ENCODE measurements at regions of chr5 and their contacts with region 1.

Region 1: DNA sequence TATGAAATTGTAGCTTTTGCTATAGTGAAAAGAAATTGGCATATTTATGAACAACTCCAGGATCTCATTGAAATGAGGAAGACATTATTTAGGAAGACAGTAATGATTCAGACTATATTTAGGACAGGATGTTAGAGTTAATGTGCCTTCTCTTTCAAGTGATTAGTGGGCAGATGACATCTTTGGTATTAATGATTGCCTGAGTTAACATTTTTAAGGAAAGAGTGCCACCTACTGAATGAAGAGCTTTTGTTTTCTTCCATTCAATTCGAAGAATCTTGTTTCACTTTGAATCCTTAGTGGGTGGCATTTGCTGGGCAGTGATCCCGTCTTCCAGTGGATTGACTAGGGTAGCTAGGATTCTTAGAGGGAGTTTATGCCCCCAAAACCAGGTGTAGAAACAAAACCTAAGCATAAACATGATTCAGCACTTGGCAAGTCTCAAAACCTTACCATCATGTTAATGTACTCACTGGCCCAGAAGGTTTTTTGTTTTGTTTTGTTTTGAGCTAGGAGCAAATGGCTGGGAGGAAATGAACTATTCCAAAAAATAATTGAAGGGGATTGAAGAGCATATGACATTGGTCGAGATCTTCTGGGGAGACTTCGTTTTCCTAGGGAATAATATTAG is 23.2 kb downstream of the MAP3K1 start:
- DNase-seq: peak; percentile 26
- H3K4me3 ChIP-seq: peak overlapping the region; percentile 36
- H3K27ac ChIP-seq: no peak overlapping the region
- H3K27me3 ChIP-seq: no peaks in the 10 kb centered on the region
- CTCF ChIP-seq: peak; percentile 51

Region 2: DNA sequence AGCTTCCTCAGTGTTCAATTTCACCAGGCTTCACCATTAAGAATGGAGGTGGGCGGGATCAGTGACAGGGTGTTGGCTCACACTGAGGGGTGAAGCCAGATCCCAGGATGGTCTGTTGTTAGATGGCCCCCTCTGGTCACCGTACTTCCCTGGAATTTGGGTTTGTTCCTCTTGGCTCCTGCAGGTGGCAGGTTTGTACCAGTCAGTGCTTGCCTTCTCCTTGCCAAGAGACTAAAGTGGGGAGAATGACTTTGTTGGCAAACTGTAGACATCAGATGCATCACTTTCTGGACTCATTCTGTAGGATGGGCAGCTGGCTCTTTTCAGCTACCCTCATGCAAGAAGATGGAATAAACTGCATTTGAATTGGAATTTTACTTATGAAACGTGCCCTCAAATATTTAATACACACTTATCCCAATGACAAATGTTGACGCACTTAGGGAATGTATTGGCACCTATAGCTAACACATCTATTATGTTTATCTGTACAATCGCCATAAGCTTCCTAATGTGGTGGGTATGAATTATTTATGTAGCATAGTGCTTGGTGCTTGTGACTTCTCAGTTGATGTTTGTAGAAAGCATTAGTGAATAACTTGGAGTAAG is 574.0 kb before region 1 on chr5:
- CTCF ChIA-PET with region 1: interaction called, 175 read pairs
- POLR2A ChIA-PET with region 1: no interaction called
- DNase-seq: no peak
- H3K4me3 ChIP-seq: no peak overlapping the region
- H3K27ac ChIP-seq: no peak overlapping the region
- H3K27me3 ChIP-seq: no peaks in the 10 kb centered on the region
- CTCF ChIP-seq: peak; percentile 55

Region 3: GRCh38 chr5:56818450-56819037 is 20.0 kb before region 1 on chr5:
- CTCF ChIA-PET with region 1: interaction called, 26 read pairs
- POLR2A ChIA-PET with region 1: no interaction called
- DNase-seq: no peak
- H3K4me3 ChIP-seq: peak overlapping the region; percentile 28
- H3K27ac ChIP-seq: no peak overlapping the region
- H3K27me3 ChIP-seq: no peaks in the 10 kb centered on the region
- CTCF ChIP-seq: peak; percentile 47

Region 4: DNA sequence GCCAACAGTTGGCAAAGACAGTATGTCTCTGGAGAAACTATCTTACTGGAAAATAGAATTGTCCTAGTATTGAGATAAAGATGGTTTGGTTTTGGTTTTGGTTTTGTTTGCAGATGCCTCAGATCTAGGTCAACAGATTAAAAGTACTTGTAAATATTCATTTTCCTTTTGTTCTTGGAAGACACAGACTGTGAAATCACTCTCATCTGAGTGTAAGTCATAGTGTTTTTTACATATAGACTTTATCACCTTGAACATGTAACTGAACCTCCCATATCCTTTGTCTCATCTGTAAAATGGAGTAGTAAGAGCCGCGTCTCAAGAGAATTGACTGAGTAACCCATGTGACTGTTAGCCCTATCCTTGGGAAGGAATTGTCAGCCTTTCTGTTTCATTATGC is 11.1 kb after region 1 on chr5:
- CTCF ChIA-PET with region 1: interaction called, 15 read pairs
- POLR2A ChIA-PET with region 1: interaction called, 3 read pairs
- DNase-seq: no peak
- H3K4me3 ChIP-seq: no peak overlapping the region
- H3K27ac ChIP-seq: no peak overlapping the region
- H3K27me3 ChIP-seq: no peaks in the 10 kb centered on the region
- CTCF ChIP-seq: no peak

Measured in AG04450 (cell line).